Dorsolateral prefrontal cortex (tissue), 120 donors: ENCODE measurements at regions of chr3 and their contacts with region 1.

Region 1: GRCh38 chr3:190017521-190018288 is 103.0 kb downstream of the P3H2 start:
- DNase-seq: peak in 1 of 10 donors; percentile 35
- H3K4me3 ChIP-seq: no peak overlapping the region
- H3K27ac ChIP-seq: no peak overlapping the region
- H3K27me3 ChIP-seq: no peaks in the 10 kb centered on the region
- CTCF ChIP-seq: peak in 54 of 56 donors; percentile 15 to 78 (median 47)

Region 2: DNA sequence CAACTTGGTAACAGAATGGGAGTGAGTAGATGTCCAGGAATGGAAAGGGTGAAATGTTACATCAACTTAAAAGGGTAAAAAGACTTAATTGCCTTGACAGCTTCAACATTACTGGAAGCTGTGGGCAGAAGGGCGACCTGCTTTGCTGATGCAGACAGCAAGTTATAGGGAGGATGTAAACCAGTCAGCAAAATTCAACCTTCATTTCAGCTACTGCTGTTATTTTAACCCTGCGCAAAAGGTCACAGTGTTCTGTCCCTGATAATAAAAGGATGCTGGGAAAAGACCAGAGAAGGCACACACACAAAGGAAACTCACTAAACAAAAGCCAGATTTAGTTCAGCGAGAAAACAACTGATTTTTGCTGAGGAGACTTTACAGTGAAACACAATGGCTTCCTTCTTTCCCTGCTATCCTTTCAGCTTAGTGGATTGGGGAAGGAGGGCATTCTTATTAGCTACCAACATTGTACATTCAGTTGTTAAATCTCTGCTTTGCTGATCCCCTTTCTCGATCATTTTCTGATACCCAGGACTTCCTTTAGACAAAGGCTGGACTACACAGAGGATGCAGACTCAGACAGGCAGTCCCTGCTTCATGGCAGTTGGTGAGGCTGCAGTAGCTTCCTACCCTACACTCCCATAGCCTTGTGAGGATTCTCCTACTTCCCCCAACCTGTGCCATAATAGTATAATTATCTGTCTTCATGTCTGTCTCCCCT is 41.0 kb after region 1 on chr3:
- intact Hi-C with region 1: loop called in 1 of 2 experiments (anchors 5 kb)
- DNase-seq: no peak
- H3K4me3 ChIP-seq: peak overlapping the region in 18 of 59 donors; percentile 0 to 46 (median 17)
- H3K27ac ChIP-seq: peak overlapping the region in 56 of 59 donors; percentile 4 to 93 (median 77)
- H3K27me3 ChIP-seq: no peaks in the 10 kb centered on the region
- CTCF ChIP-seq: peak in 2 of 56 donors; percentile 8 to 10

Region 3: DNA sequence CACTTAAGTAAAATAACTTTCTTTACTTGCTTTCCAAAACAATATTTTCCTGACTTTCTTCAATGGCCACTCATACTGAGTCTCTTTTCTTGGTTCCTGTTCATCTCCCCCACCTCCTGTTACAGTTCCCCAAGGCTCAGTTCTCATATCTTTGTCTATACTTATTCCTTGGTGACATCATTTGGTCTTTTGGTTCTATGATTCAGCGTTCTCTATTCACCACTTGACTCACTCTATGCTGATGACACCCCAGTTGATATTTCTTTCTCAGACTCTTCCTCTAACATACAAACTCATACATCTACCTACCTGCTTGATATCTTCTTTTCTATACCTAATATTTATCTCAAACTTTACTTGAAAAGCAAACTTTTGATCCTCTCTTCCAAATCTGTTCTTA is 188.0 kb after region 1 on chr3:
- intact Hi-C with region 1: loop called in 1 of 2 experiments (anchors 5 kb)
- DNase-seq: no peak
- H3K4me3 ChIP-seq: no peak overlapping the region
- H3K27ac ChIP-seq: no peak overlapping the region
- H3K27me3 ChIP-seq: no peaks in the 10 kb centered on the region
- CTCF ChIP-seq: no peak

Region 4: GRCh38 chr3:190252080-190252479 is 234.4 kb after region 1 on chr3:
- intact Hi-C with region 1: no loop called
- DNase-seq: no peak
- H3K4me3 ChIP-seq: no peak overlapping the region
- H3K27ac ChIP-seq: no peak overlapping the region
- H3K27me3 ChIP-seq: no peaks in the 10 kb centered on the region
- CTCF ChIP-seq: no peak